ENCODE measurements at regions of chr6 and their contacts with region 1.

Region 1: DNA sequence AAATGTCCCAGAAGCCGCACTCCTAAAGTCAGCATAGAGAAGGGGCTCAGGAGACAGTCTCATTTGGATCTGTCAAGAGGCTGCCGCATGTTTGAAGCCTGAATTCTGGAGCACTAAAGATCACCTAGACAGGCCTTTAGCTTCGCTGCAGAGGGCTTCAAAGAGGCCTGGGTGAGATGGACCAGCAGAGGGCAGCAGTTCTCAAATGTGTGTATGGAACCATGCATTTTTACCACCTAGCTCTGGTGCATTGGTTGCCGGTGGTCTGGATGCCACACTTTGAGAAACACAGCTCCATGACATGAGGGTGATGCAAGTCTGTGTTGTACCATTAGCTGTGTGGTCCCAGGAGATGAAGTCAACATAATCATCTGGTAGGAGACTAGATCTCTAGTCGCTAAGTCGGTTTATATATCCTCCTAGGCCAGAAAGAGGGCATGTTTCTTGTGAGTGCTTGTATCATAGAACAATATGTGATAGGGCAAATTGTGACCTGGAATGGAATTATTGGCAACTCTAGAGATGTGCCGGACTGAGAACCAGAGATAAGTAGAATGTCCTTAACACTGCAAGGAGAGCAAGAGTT is 64.8 kb downstream of the KIAA0319 start:
- DNase-seq: peak; percentile 49 to 95 (median 79)

Region 2: GRCh38 chr6:24415753-24416152 is 165.4 kb before region 1 on chr6:
- intact Hi-C with region 1: no loop called
- DNase-seq: no peak

Region 3: DNA sequence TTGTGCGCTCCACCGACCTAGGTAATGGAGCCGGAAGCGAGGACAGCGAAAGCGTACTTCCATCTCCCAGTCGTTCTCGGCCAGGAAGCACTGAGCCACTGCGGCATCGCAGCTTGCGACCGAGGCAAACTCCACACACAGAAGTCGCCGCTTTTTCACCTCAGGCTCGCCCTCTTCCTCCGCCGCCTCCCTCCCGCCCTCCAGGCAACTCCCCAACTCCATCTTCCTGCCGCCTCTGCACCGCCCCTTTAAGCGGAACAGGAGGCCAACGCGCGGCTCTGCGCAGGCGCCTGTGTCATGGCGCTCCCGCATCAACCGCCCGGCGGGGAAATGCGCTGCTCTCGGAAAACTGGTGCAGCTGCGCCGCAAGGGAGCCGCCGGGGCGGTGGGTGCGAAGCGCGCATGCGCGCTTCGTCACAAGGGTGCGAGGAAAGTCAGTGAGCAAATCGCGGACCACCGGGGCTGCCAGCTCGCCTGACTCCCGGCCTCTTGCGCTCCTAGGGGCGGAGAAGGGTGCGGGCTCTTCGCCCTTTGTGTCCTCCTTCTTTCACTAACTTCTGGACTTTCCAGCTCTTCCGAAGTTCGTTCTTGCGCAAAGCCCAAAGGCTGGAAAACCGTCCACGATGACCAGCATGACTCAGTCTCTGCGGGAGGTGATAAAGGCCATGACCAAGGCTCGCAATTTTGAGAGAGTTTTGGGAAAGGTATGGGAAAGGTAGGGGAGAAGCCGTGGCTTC is 85.6 kb after region 1 on chr6 and contains the starts of genes ACOT13 and TDP2:
- intact Hi-C with region 1: loop called (anchors 2 kb)
- DNase-seq: peak; percentile 91 to 99 (median 94)

Region 4: DNA sequence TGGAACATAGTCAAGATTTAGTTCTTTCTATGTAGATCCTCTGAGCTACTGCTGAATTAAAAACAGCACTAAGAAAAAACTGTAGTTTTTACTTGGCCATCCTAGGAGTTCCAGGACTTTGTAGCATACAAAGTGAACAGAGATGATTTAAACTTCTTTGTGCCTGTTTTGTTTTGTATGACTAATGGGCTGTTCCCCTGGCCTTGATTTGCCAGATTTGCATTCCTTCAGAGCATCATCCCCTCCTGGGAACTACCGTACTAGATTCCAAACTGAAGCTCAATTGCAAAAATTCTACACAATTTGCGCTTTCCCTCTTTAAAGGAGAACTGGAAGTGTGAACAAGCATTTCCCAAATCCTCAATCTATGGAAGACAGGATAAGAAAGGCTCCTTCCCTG is 108.8 kb after region 1 on chr6:
- intact Hi-C with region 1: loop called (anchors 1 kb)
- DNase-seq: no peak

Region 5: DNA sequence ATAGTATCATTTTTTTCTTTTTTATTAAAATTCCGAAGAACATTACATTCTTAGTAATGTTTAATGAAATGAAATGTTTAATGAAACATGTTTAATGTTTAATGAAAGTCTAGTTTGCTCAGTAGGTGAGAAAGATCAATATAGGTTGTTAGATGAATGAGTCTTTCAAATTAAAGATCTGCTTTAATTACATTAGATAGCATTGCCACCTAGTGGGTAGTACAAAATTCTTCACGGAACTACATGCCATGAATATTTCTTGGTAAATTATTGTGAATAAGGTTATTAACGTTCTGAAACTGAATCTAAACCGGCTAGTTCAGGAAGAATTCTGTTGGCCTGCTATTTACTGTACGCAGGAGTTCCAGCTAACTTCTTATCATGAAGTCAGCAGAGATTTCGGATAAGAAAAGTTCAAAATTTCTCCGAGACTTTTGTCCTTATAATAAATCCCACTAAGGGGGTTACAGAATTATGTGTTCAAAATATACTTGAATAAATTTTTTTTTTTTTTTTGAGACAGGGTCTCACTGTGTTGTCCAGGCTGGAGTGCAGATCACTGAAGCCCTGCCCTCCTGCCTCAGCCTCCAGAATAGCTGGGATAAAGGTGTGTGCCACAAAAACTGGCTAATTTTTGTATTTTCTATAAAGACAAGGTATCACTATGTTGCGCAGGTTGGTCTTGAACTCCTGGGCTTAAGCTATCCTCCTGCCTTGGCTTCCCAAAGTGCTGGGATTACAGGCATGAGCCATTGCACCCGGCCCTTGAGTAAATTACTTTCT is 185.7 kb after region 1 on chr6:
- intact Hi-C with region 1: loop called (anchors 5 kb)
- DNase-seq: no peak

Region 6: GRCh38 chr6:24902782-24903181 is 321.6 kb after region 1 on chr6:
- intact Hi-C with region 1: no loop called
- DNase-seq: no peak

Region 7: DNA sequence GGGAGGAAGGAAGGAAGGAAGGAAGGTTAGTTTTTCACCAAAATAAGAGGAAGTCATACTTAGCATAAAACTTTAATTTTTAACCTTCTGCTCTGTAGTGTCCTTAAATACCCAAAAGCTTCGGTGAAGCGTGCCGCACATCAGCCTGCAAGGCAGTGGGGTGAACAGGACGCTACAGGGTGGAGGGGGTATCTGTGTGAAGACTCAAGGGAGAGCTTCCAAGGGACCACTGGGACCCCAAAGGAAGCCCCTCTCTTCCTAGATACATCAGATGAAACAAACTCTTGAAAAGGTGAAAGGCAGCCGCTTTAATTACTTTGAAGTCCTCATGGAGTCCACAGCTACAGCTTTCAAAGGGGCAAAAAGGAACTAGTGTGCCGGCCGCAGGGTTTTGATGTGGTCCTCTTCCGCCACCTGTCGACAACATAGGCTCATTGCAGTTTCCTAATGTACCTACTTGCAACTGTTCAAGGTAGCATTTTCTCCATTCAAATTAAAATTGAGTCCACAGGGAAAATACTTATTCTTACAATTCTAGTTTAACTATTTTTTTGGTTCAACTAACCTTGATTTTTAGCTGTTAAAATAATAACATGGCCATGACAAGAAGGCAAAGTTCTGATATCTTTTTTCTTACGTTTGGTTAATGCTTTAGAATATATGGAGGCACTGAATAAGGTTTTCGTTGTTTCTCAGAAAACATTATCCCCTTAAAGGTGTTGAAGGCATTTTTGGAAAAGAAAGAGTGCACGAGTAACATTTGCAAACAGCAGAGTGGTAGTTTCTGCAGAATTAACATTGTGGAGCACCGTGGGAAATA is 489.6 kb after region 1 on chr6:
- intact Hi-C with region 1: loop called (anchors 2 kb)
- DNase-seq: peak; percentile 47 to 93 (median 78)